Breast epithelium (tissue), 4 donors: ENCODE measurements at regions of chr6 and their contacts with region 1.

Region 1: GRCh38 chr6:28580475-28580874 is 54.8 kb downstream of the GPX5 start:
- DNase-seq: no peak
- H3K4me3 ChIP-seq: no peak overlapping the region
- H3K27ac ChIP-seq: no peak overlapping the region
- H3K4me1 ChIP-seq: no peaks in the 10 kb centered on the region
- H3K27me3 ChIP-seq: no peaks in the 10 kb centered on the region
- CTCF ChIP-seq: no peak
- POLR2A ChIP-seq: no peak

Region 2: DNA sequence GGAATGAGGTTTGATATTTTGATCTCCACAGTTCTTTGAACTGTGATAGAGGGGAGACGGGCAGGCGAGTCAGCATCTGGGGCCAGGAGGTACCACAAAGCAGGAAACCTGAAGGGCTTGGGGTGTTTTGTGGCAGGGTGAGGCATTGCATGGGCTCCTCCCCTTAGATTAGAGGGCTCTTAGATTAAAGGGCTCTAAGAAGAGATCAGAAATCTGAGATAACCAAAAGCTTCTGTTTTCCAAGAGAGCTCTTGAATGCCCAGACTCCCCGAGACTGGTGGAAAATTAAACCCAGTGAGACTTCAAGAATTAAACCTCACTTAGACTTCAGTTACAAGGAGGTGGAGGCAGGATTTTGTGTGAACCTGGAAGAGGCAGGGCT is 57.2 kb before region 1 on chr6:
- intact Hi-C with region 1: no loop called
- DNase-seq: no peak
- H3K4me3 ChIP-seq: no peak overlapping the region
- H3K27ac ChIP-seq: no peak overlapping the region
- H3K4me1 ChIP-seq: no peaks in the 10 kb centered on the region
- H3K27me3 ChIP-seq: peaks cover 0 to 31% of the 10 kb centered on the region in 2 donors
- CTCF ChIP-seq: no peak
- POLR2A ChIP-seq: no peak

Region 3: DNA sequence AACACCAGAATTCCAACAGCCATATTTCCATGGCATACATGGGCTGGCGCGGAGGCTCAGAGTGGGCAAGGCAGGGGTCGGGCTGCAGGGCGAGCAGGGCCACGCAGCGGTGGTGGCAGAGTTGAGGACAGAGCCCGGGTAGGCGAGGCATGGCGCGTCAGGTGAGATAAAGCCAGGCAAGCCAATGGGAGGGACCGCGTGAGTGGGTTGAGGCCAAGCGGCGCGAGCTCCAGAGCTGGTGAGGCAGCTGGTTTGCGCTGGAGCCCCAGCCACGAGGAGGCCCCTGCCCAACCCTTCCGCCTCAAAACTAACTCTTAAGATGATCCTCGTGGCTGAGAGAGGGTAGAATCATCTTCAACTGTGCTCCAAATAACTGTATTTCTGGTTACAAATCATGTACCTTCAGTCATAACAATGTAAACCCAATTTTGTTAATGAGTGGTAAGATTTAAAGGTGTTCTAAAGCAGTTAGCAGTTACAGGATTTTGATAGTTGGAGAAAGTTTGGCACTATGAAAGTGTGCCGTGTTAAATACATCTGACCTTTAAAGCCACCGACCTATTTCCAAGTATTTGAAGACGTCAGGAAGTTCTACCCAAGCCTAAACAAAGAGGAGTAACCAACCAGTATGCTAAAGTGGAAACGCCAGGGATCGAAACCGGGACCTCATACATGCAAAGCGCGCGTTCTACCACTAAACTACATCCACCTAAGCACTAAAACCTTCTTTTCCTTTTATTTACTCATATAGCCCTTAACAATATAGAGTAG is 53.2 kb after region 1 on chr6:
- intact Hi-C with region 1: loop called (anchors 2 kb)
- DNase-seq: no peak
- H3K4me3 ChIP-seq: no peak overlapping the region
- H3K27ac ChIP-seq: no peak overlapping the region
- H3K4me1 ChIP-seq: no peaks in the 10 kb centered on the region
- H3K27me3 ChIP-seq: peaks cover 0 to 68% of the 10 kb centered on the region in 2 donors
- CTCF ChIP-seq: no peak
- POLR2A ChIP-seq: no peak